ENCODE measurements at regions of chr12 and their contacts with region 1.

Region 1: DNA sequence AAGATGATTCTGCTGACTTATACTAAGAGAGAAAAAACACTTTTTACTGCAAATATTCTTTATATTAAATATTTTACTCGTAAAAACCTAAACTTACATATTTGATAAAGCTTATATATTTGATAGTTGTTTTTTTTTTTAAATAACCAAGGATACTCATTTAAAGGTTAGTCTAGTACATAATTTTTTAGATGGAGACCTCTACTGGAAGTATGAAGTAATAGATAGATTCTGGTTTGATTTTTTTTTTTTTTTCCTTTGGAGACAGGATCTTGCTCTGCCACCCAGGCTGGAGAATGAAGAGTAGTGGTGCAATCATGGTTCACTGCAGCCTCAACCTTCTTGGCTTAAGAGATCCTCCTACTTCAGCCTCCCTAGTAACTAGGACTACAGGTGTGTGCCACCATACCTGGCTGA is 16.4 kb downstream of the ARID2 start:
- DNase-seq: no peak
- ATAC-seq: no peak
- H3K4me3 ChIP-seq: no peak overlapping the region
- H3K27ac ChIP-seq: no peak overlapping the region
- H3K4me1 ChIP-seq: peaks cover 0 to 1% of the 10 kb centered on the region in 2 donors
- H3K27me3 ChIP-seq: no peaks in the 10 kb centered on the region

Region 2: DNA sequence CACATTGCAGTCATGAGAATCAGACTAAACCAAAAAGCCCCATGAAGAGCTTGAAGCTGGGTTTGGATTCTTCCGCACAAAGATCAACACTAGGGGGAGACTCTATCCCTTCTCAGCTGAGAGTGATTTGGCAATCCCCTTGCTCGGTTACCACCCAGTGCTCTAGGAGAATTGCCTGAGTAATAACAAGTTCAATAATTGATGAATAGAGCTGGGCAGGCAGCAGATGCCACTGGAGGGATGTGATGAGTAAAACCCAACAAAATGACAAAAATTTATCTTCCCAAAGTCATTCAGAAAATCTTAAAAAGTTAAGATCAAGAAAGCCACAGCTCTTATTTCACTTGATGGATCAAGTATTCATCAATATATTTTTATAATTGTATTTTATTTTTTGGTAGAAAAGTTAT is 202.0 kb before region 1 on chr12:
- intact Hi-C with region 1: loop called in 1 of 2 experiments (anchors 10 kb)
- DNase-seq: no peak
- ATAC-seq: peak; percentile 83
- H3K4me3 ChIP-seq: no peak overlapping the region
- H3K27ac ChIP-seq: no peak overlapping the region
- H3K4me1 ChIP-seq: no peaks in the 10 kb centered on the region
- H3K27me3 ChIP-seq: no peaks in the 10 kb centered on the region

Measured in aorta (tissue), 5 donors.